CD8-positive, alpha-beta T cell (primary cell): ENCODE measurements at regions of chr2 and their contacts with region 1.

Region 1: DNA sequence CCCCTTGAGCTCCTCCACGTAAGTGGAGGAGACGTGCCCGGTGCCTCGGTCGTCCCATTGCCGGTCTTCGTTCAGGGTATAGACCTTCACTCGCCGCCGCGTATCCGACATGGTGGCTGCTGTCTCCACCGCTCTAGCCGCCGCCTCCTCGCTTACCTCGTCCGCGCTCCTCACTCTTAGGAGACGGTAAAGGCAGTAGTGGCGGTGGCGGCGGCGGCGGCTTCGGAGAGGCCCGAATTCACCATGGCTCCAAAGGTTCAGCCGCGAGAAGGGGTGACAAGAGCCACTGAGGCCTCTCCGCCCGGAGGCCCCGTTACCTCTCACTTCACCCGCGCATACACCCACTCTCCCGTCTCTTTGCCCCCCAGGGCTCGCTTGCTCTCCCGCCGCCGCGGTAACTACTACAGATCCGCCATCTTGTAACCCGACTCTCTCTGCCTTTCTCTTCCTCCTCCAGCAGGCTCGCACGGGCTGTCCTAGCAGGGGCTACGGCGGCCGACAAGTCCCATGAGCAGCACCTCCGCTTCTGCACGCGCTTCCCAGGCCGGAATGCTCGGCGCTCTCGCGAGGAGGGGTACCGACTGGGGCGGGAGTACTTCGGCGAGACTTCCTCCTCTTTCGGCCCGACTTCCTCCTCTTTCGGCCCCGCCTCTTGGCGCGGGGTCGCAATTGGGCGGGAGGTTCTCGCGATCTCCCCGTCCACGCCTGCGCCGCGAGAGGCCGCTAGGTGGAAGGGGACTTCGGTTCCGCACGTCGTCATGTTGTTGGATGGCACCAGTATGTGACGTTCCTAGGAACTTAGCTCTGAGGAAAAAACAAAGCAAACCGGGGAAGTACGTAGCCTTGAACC is at the start of gene PPP4R3B:
- DNase-seq: peak; percentile 96 to 100 (median 98)
- ATAC-seq: peak; percentile 83
- H3K4me3 ChIP-seq: peak within 1 kb of the TSS; percentile 95 to 97
- H3K4me3 Mint-ChIP-seq: no peak within 1 kb of the TSS
- H3K27ac ChIP-seq: peak within 1 kb of the TSS; percentile 97 to 99
- H3K27ac Mint-ChIP-seq: no peak within 1 kb of the TSS
- H3K4me1 ChIP-seq: peaks cover 50% of the 10 kb centered on the region
- H3K4me1 Mint-ChIP-seq: peaks cover 63% of the 10 kb centered on the region
- H3K27me3 ChIP-seq: no peaks in the 10 kb centered on the region
- H3K27me3 Mint-ChIP-seq: no peaks in the 10 kb centered on the region
- CTCF ChIP-seq: peak; percentile 21
- total RNA-seq, gene PPP4R3B: 39.0 to 43.9 TPM

Region 2: GRCh38 chr2:53767405-53768241 is 1849.8 kb before region 1 on chr2 and contains the start of gene CHAC2:
- CTCF ChIA-PET with region 1: no interaction called
- POLR2A ChIA-PET with region 1: interaction called, 6 read pairs
- intact Hi-C with region 1: loop called (anchors 1 to 5 kb)
- DNase-seq: peak; percentile 50 to 92 (median 84)
- ATAC-seq: peak; percentile 87
- H3K4me3 ChIP-seq: peak within 1 kb of the TSS; percentile 71 to 96
- H3K4me3 Mint-ChIP-seq: peak within 1 kb of the TSS; percentile 92
- H3K27ac ChIP-seq: peak within 1 kb of the TSS; percentile 70 to 86
- H3K27ac Mint-ChIP-seq: peak within 1 kb of the TSS; percentile 93
- H3K4me1 ChIP-seq: peaks cover 9% of the 10 kb centered on the region
- H3K4me1 Mint-ChIP-seq: peaks cover 29% of the 10 kb centered on the region
- H3K27me3 ChIP-seq: no peaks in the 10 kb centered on the region
- H3K27me3 Mint-ChIP-seq: no peaks in the 10 kb centered on the region
- CTCF ChIP-seq: peak; percentile 31
- total RNA-seq, gene CHAC2: 0.87 to 1.0 TPM

Region 3: DNA sequence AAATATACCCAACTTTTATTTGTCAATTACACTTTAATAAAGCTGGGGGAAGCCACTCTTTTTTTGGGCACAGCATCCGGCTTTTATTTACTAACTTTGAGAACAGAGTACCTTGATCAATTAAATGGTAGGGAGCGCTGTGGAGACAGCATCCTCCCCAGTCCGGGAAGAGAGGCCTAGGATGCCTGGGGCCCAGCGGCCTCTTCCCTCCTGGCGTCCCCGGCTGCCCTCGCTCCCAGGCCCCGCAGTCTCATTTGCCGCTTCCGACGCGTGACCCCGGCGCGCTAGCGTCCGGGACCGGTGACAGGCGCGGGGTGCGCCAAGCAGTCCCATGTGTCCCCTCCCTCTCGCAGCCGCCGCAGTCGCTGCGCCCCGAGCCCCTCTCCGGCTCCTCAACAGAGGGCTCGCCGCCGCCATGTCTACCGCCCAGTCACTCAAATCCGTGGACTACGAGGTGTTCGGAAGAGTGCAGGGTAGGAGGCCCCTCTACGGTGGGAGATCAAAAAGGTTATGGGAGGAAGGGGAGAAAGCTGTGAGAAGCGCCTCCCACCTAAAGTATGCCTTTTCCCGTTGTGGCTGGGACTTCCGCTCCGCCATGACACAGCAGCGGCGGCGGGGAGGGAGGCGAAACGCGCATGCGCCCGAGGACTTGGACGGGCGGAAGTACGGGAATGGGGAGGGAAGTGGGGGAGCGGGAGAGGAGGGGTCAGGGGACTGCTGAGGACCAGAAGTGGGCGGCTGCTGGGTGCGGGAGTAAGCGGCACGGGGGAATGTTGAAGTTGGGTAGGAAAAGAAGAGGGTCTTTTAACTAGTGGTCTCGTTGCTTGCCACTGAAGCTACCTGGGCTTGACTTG is 1501.9 kb before region 1 on chr2 and contains the start of gene ACYP2:
- CTCF ChIA-PET with region 1: no interaction called
- POLR2A ChIA-PET with region 1: no interaction called
- intact Hi-C with region 1: loop called (anchors 2 to 5 kb)
- DNase-seq: peak; percentile 77 to 96 (median 91)
- ATAC-seq: peak; percentile 81
- H3K4me3 ChIP-seq: peak within 1 kb of the TSS; percentile 75 to 93
- H3K4me3 Mint-ChIP-seq: peak within 1 kb of the TSS; percentile 98
- H3K27ac ChIP-seq: peak within 1 kb of the TSS; percentile 94 to 98
- H3K27ac Mint-ChIP-seq: peak within 1 kb of the TSS; percentile 100
- H3K4me1 ChIP-seq: peaks cover 5% of the 10 kb centered on the region
- H3K4me1 Mint-ChIP-seq: peaks cover 22% of the 10 kb centered on the region
- H3K27me3 ChIP-seq: no peaks in the 10 kb centered on the region
- H3K27me3 Mint-ChIP-seq: no peaks in the 10 kb centered on the region
- CTCF ChIP-seq: no peak
- total RNA-seq, gene ACYP2: 10.2 to 10.4 TPM

Region 4: GRCh38 chr2:55232084-55232862 is 385.1 kb before region 1 on chr2 and contains the starts of genes CLHC1 and RPS27A:
- CTCF ChIA-PET with region 1: no interaction called
- POLR2A ChIA-PET with region 1: no interaction called
- intact Hi-C with region 1: loop called (anchors 1 to 2 kb)
- DNase-seq: peak; percentile 89 to 97 (median 94)
- ATAC-seq: peak; percentile 87
- H3K4me3 ChIP-seq: peak within 1 kb of the TSS; percentile 97 to 99
- H3K4me3 Mint-ChIP-seq: peak within 1 kb of the TSS; percentile 93
- H3K27ac ChIP-seq: peak within 1 kb of the TSS; percentile 92 to 99
- H3K27ac Mint-ChIP-seq: peak within 1 kb of the TSS; percentile 97
- H3K4me1 ChIP-seq: peaks cover 35% of the 10 kb centered on the region
- H3K4me1 Mint-ChIP-seq: peaks cover 68% of the 10 kb centered on the region
- H3K27me3 ChIP-seq: no peaks in the 10 kb centered on the region
- H3K27me3 Mint-ChIP-seq: no peaks in the 10 kb centered on the region
- CTCF ChIP-seq: no peak
- total RNA-seq, gene CLHC1: 2.2 to 2.3 TPM
- total RNA-seq, gene RPS27A: 2,135 to 2,231 TPM

Region 5: GRCh38 chr2:55519938-55520885 is 97.2 kb before region 1 on chr2:
- CTCF ChIA-PET with region 1: no interaction called
- POLR2A ChIA-PET with region 1: interaction called, 55 read pairs
- intact Hi-C with region 1: loop called (anchors 1 kb)
- DNase-seq: peak in 8 of 9 experiments; percentile 14 to 67 (median 44)
- ATAC-seq: peak; percentile 27
- H3K4me3 ChIP-seq: peak overlapping the region; percentile 85 to 87
- H3K4me3 Mint-ChIP-seq: peak overlapping the region; percentile 97
- H3K27ac ChIP-seq: peak overlapping the region; percentile 85 to 95
- H3K27ac Mint-ChIP-seq: peak overlapping the region; percentile 100
- H3K4me1 ChIP-seq: peaks cover 8% of the 10 kb centered on the region
- H3K4me1 Mint-ChIP-seq: peaks cover 20% of the 10 kb centered on the region
- H3K27me3 ChIP-seq: no peaks in the 10 kb centered on the region
- H3K27me3 Mint-ChIP-seq: no peaks in the 10 kb centered on the region
- CTCF ChIP-seq: no peak

Region 6: DNA sequence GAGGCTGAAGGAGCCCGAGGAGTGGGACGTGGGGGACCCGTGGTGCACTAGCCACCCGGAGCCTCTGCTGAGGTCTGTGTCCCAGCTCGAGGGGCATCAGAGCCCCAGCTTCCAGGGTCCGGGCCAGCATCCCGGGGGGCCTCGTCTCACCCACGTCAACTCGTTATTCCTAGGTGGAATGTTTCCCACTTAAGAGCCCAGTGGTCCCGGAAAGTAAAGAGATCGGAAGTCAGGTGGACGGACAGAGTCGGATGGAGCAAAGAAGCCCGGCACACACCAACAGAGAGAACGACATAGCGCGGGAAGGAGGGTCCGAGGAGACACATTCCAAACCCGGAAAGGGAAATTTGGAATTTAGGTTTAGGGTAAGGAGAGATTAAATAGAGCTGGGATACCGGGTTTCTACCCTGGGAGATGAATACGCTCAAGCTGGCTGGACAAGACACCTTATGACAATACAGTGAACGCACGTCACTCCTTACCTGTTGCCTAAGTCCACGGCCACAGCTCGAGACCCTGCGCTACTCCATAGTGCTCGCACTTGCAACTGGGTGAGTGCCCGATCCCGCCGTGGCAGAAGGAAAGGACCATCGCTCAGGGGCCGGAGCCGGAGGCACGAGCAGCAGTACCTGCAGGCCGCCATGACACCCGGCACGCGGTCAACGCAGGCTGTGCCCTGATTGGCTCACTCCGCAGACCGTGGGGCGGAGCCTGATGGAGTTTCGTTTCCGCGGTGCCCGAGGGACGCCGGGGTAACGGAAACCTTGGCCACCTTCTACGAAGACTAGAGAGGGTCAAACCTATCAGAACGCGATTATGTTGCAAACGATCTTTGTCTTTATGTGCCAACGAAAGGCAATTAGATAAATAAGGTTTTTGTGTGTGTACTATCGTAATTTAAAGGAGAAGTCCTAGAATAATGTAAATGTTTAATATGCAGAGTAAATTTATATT is 76.1 kb after region 1 on chr2 and contains the start of gene PNPT1:
- CTCF ChIA-PET with region 1: no interaction called
- POLR2A ChIA-PET with region 1: interaction called, 3 read pairs
- intact Hi-C with region 1: loop called (anchors 1 to 2 kb)
- DNase-seq: peak; percentile 84 to 95 (median 92)
- ATAC-seq: peak; percentile 100
- H3K4me3 ChIP-seq: peak within 1 kb of the TSS; percentile 90 to 98
- H3K4me3 Mint-ChIP-seq: peak within 1 kb of the TSS; percentile 98
- H3K27ac ChIP-seq: peak within 1 kb of the TSS; percentile 59 to 66
- H3K27ac Mint-ChIP-seq: peak within 1 kb of the TSS; percentile 93
- H3K4me1 ChIP-seq: peaks cover 12% of the 10 kb centered on the region
- H3K4me1 Mint-ChIP-seq: peaks cover 40% of the 10 kb centered on the region
- H3K27me3 ChIP-seq: no peaks in the 10 kb centered on the region
- H3K27me3 Mint-ChIP-seq: no peaks in the 10 kb centered on the region
- CTCF ChIP-seq: no peak
- total RNA-seq, gene PNPT1: 12.8 to 13.9 TPM